HCT116 (cell line): ENCODE measurements at regions of chr11 and their contacts with region 1.

Region 1: DNA sequence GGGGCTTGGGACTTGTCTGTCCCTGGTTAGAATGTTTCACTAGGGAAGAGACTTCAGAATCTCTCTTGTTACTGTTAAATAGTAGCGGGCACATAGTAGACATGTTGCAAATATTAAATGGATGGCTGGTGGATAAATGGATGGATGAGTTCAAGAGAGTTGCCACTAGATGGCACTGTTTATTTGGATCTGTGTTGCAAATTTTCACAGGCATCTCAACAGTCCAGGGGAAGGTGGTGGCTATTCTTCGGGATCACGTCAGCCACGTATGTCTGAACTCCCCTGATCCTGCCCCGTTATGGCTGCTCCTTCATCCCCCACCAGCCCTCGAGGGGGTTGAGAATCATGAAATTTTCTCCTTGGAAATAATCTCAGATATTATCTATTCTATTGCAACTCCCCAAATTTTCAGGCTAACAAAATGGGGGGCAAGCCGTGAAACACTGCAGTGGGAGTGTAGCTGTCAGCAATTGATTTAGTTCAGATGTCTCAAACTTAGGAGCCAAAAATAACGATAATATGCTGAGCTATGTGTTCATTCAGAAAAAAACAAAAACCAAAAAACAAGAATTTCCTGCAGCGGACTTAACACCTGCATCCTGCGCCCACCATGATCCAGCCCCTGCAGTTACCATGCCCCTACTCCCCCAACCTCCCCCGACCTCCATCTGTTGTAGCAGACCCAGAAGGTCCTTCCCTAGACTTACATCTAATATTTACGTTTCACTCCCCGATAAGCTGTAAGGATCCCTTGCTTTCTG is 29.1 kb upstream of the BIRC3 start:
- DNase-seq: peak; percentile 69
- ATAC-seq: peak; percentile 93
- H3K4me3 ChIP-seq: peak overlapping the region in 1 of 2 experiments; percentile 31; a peak in 2 of 4 replicates
- H3K27ac ChIP-seq: no peak overlapping the region
- H3K4me1 ChIP-seq: peaks cover 0 to 12% of the 10 kb centered on the region in 2 experiments; a peak in 2 of 4 replicates
- H3K27me3 ChIP-seq: no peaks in the 10 kb centered on the region
- CTCF ChIP-seq: peak; percentile 55 to 81 (median 73)
- POLR2A ChIP-seq: no peak
- RAD21 ChIP-seq: peak; percentile 89

Region 2: GRCh38 chr11:102341844-102342318 is 53.7 kb after region 1 on chr11:
- CTCF ChIA-PET with region 1: interaction called, 19 read pairs
- POLR2A ChIA-PET with region 1: interaction called, 3 read pairs
- RAD21 ChIA-PET with region 1: interaction called in 1 of 2 experiments, 3 read pairs
- intact Hi-C with region 1: loop called (anchors 2 kb)
- DNase-seq: peak; percentile 89
- ATAC-seq: peak; percentile 83
- H3K4me3 ChIP-seq: no peak overlapping the region
- H3K27ac ChIP-seq: no peak overlapping the region
- H3K4me1 ChIP-seq: peaks cover 2 to 29% of the 10 kb centered on the region in 2 experiments; a peak in 3 of 4 replicates
- H3K27me3 ChIP-seq: no peaks in the 10 kb centered on the region
- CTCF ChIP-seq: peak; percentile 77 to 87 (median 86)
- POLR2A ChIP-seq: no peak
- RAD21 ChIP-seq: peak; percentile 91

Region 3: GRCh38 chr11:102346748-102347461 is 58.8 kb after region 1 on chr11 and contains the start of gene BIRC2:
- CTCF ChIA-PET with region 1: interaction called, 19 read pairs
- POLR2A ChIA-PET with region 1: interaction called, 3 read pairs
- RAD21 ChIA-PET with region 1: interaction called in 1 of 2 experiments, 3 read pairs
- intact Hi-C with region 1: loop called (anchors 2 kb)
- DNase-seq: peak; percentile 78
- ATAC-seq: peak; percentile 91
- H3K4me3 ChIP-seq: peak within 1 kb of the TSS; percentile 75 to 80
- H3K27ac ChIP-seq: peak within 1 kb of the TSS; percentile 62
- H3K4me1 ChIP-seq: peaks cover 2 to 22% of the 10 kb centered on the region in 2 experiments; a peak in 3 of 4 replicates
- H3K27me3 ChIP-seq: no peaks in the 10 kb centered on the region
- CTCF ChIP-seq: peak; percentile 49 to 76 (median 53); a peak in 5 of 6 replicates
- POLR2A ChIP-seq: peak; percentile 63
- RAD21 ChIP-seq: peak; percentile 54
- total RNA-seq, gene BIRC2: 32.6 TPM

Region 4: DNA sequence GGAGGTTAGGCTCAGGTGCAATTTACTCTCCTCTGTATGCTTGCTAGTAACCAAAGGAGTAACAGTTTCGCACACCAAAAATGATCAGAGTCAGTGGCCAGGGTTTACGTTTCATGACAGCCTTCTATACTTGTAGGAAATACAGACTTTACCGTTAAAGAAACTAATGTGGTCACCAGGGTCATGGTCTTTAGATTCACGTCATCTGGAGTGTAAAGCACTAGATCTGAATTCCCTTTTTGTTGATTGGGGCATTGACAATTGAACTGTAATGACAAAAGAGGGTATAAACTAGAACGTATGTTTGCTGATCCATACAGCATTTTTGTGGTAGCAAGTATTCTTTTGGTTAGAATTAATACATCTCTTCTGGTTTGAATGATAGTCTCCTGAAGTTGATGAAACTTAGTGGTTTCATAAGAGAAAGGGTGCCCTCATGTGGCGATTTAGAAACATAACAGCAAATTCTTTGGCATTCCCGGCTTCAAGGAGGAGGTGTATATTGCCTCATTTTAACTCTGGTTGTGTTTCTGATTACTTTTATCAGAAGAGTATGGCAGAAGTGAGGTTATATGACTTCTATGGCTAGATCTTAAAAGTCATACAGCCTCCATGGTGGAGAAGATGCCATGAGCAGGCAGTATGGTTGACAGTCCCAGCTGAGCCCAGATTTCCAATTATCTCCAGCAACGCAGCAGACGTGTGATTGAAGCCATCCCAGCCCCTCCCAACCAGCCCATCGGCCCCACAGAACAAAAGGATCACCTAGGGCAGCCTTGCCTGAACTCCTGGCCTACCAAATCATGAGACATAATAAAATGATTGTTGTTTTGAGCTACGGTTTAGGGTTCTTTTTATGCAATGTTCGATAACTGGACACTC is 207.3 kb after region 1 on chr11:
- CTCF ChIA-PET with region 1: no interaction called
- POLR2A ChIA-PET with region 1: no interaction called
- RAD21 ChIA-PET with region 1: no interaction called
- intact Hi-C with region 1: loop called (anchors 1 kb)
- DNase-seq: peak; percentile 81
- ATAC-seq: peak; percentile 81
- H3K4me3 ChIP-seq: peak overlapping the region; percentile 20 to 38
- H3K27ac ChIP-seq: no peak overlapping the region
- H3K4me1 ChIP-seq: peaks cover 13 to 35% of the 10 kb centered on the region in 2 experiments
- H3K27me3 ChIP-seq: no peaks in the 10 kb centered on the region
- CTCF ChIP-seq: peak; percentile 52 to 88 (median 79)
- POLR2A ChIP-seq: no peak
- RAD21 ChIP-seq: peak; percentile 95

Region 5: GRCh38 chr11:103744496-103745153 is 1456.5 kb after region 1 on chr11:
- CTCF ChIA-PET with region 1: no interaction called
- POLR2A ChIA-PET with region 1: no interaction called
- RAD21 ChIA-PET with region 1: no interaction called
- intact Hi-C with region 1: no loop called
- DNase-seq: no peak
- ATAC-seq: no peak
- H3K4me3 ChIP-seq: no peak overlapping the region
- H3K27ac ChIP-seq: no peak overlapping the region
- H3K4me1 ChIP-seq: no peaks in the 10 kb centered on the region
- H3K27me3 ChIP-seq: no peaks in the 10 kb centered on the region
- CTCF ChIP-seq: no peak
- POLR2A ChIP-seq: no peak
- RAD21 ChIP-seq: no peak